ENCODE measurements at regions of chr17 and their contacts with region 1.

Region 1: DNA sequence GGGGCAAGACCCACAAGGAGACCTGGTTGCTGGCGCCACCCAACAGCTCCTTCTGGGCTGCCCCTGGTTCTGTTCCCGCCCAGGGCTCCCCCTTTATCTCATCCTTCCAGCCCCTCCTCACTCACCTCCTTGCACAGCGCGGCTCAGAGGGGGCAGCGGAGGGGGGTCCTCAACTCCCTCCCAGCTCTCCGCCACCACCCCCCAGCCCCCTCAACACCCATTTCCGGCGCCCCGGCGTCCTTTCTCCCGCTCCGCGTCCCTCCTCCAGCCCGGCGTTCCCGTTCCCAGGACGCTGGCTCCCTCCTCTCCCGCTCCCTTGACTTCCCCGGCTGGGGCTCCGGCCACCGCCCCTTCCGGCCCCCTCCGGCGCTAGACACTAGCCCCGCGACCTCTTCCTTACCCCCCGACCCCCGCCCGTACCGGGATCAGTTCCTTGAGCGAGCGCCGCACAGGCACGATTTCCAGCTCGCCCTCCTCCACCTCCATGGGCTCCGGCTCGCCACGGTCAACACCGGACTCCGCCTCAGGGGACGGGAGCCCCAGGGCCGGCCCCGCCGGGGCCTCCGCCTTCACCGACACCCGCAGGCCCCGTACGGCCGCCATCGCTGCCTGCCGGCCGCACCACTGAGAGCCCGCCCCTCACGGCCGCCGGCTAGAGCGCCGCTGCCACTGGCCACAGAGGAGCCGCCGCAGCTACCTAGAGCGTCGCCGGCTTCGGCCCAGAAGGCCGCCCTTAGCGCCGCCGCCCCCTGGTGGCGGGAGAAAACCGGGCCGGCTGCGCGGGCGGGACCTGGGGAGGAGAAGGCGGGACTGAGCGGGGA is at the start of gene NCBP3:
- DNase-seq: peak; percentile 91
- H3K4me3 Mint-ChIP-seq: peak within 1 kb of the TSS; percentile 94
- H3K27ac Mint-ChIP-seq: peak within 1 kb of the TSS; percentile 90
- H3K4me1 Mint-ChIP-seq: peaks cover 22% of the 10 kb centered on the region
- H3K27me3 Mint-ChIP-seq: no peaks in the 10 kb centered on the region
- total RNA-seq, gene NCBP3: 33.9 to 40.4 TPM

Region 2: DNA sequence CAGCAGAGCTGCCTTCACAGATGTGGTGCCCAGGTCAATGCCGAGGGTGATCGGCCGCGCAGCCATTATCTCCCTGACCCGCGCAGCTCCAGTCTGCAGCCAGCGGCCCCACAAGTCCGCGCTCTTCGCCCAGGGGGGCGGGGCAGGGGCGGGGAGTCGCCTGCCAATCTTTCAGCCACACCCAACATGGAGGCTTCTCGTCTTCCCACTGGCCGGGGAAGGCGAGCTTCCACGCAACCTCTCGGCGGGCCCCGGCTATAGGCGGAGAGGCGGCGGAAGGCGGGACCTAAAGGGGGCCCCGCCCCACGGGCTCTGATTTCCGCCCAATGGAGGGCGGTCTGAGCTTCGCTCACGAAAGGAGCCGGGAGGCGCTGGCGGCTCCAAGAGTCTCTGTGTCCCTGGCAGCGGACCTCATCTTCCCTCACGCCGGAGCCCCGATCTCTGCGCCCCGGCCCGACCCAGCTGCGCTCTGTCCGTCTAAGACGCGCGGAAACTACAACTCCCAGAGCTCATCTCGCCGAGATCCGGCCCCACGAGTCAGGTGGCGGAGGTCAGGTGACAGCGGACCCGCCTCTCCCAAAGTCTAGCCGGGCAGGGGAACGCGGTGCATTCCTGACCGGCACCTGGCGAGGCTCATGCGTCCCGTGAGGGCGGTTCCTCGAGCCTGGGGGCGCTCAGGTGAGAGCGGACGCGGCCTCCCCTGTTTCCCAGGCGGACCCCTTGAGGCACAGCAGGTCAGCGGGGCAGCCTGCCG is 209.5 kb before region 1 on chr17 and contains the starts of genes CTNS and SHPK:
- CTCF ChIA-PET with region 1: no interaction called
- intact Hi-C with region 1: loop called (anchors 1 kb)
- DNase-seq: peak; percentile 95
- H3K4me3 Mint-ChIP-seq: peak within 1 kb of the TSS; percentile 95
- H3K27ac Mint-ChIP-seq: peak within 1 kb of the TSS; percentile 99
- H3K4me1 Mint-ChIP-seq: peaks cover 30% of the 10 kb centered on the region
- H3K27me3 Mint-ChIP-seq: no peaks in the 10 kb centered on the region
- total RNA-seq, gene CTNS: 4.5 TPM
- total RNA-seq, gene SHPK: 6.9 to 7.5 TPM

Region 3: GRCh38 chr17:3683054-3683511 is 162.7 kb before region 1 on chr17:
- CTCF ChIA-PET with region 1: interaction called, 3 read pairs
- intact Hi-C with region 1: loop called (anchors 5 kb)
- DNase-seq: peak; percentile 72
- H3K4me3 Mint-ChIP-seq: no peak overlapping the region
- H3K27ac Mint-ChIP-seq: no peak overlapping the region
- H3K4me1 Mint-ChIP-seq: peaks cover 7% of the 10 kb centered on the region
- H3K27me3 Mint-ChIP-seq: no peaks in the 10 kb centered on the region

Region 4: DNA sequence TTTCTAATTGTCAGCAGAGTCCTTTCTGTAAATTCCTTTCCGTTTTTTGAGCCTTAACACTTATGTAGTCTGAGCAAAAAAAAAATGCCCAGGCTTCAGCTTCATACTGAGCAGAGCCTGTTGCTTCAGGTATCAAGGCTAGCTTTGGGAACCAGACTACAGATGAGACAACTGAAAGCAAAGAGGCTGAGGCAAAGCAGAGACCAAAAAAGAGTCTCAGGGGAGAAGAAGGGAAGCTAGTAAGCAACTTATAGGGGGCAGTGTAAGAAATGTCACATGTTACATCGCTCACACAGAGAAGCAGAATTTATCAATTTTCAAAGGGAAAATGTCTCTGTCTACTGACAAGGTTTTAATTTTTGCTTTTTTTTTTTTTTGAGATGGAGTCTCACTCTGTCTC is 118.8 kb before region 1 on chr17:
- CTCF ChIA-PET with region 1: no interaction called
- intact Hi-C with region 1: no loop called
- DNase-seq: no peak
- H3K4me3 Mint-ChIP-seq: no peak overlapping the region
- H3K27ac Mint-ChIP-seq: no peak overlapping the region
- H3K4me1 Mint-ChIP-seq: peaks cover 31% of the 10 kb centered on the region
- H3K27me3 Mint-ChIP-seq: no peaks in the 10 kb centered on the region

Region 5: DNA sequence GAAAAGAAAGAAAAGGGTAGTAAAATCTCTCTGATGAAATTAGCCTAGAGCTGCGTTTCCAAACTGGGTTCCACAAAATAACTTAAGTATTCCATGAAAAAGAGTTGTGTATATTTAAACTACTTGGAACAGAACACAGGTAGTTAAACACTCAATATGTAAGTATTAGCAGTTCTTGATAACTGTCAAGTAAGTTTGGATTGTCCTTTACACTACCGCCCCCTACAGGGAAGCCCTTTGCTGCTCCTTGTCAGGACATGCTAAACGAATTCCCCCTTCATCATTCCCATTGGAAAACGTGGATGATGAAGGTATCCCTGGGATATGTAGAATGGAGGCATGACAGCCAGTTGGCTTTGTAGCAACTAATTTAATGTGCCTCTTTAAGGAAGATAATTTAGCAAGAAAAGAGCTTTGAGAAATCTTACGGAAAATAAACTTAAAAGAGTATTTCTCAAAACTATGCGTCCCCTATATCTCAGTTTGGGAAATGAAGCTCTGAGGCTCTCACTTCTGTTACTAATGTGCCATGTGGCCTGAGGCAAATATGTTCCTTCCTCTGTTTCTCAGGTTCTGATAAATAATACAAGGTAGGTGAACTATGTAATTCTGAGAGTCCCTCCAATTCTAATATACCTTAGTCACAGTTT is 18.6 kb before region 1 on chr17:
- CTCF ChIA-PET with region 1: interaction called, 39 read pairs
- intact Hi-C with region 1: no loop called
- DNase-seq: peak; percentile 89
- H3K4me3 Mint-ChIP-seq: no peak overlapping the region
- H3K27ac Mint-ChIP-seq: no peak overlapping the region
- H3K4me1 Mint-ChIP-seq: peaks cover 2% of the 10 kb centered on the region
- H3K27me3 Mint-ChIP-seq: no peaks in the 10 kb centered on the region

Region 6: DNA sequence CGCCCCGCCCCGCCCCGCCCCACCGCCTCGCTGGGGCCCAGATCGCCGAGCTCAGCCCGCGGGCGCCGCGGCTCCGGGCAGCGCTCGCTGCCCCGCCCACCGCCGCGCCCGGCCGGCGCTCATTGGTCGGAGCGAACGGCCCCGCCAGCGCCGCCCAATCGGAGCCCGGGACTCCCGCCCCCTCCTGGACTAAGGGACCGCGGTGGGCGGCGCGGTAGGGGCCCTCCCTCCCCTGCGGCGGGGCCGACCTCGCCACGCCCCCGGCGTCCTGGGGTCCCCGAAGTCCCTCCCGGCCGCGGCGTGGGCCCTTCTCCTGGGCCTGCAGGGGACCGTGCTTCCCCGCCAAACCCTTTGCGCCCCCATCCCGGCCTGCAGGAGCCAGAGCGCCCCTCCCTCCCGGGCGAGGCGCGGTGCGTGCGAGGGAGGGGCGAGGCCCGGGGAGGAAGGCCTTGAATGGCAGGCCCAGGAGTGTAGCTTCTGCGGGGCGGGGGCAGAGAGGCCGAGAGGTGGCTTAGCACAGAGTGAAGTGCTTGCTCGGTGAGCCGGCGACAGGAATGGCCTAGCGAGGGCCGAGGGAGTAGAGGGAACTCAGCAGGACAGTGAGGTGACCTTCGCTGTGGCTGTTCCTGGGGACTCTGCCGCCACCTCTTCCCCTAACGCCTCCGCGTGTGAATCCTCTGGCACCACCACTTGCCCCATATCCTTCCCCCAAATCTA is 47.3 kb after region 1 on chr17 and contains the start of gene CAMKK1:
- CTCF ChIA-PET with region 1: interaction called, 6 read pairs
- intact Hi-C with region 1: loop called (anchors 1 kb)
- DNase-seq: peak; percentile 88
- H3K4me3 Mint-ChIP-seq: peak within 1 kb of the TSS; percentile 78
- H3K27ac Mint-ChIP-seq: peak within 1 kb of the TSS; percentile 65
- H3K4me1 Mint-ChIP-seq: peaks cover 31% of the 10 kb centered on the region
- H3K27me3 Mint-ChIP-seq: no peaks in the 10 kb centered on the region
- total RNA-seq, gene CAMKK1: 2.4 to 2.7 TPM

Region 7: GRCh38 chr17:3935140-3935542 is 89.3 kb after region 1 on chr17:
- CTCF ChIA-PET with region 1: no interaction called
- intact Hi-C with region 1: no loop called
- DNase-seq: peak; percentile 54
- H3K4me3 Mint-ChIP-seq: no peak overlapping the region
- H3K27ac Mint-ChIP-seq: no peak overlapping the region
- H3K4me1 Mint-ChIP-seq: no peaks in the 10 kb centered on the region
- H3K27me3 Mint-ChIP-seq: no peaks in the 10 kb centered on the region

Region 8: GRCh38 chr17:3965118-3965803 is 119.4 kb after region 1 on chr17:
- CTCF ChIA-PET with region 1: interaction called, 3 read pairs
- intact Hi-C with region 1: loop called (anchors 2 kb)
- DNase-seq: peak; percentile 83
- H3K4me3 Mint-ChIP-seq: peak overlapping the region; percentile 91
- H3K27ac Mint-ChIP-seq: peak overlapping the region; percentile 89
- H3K4me1 Mint-ChIP-seq: peaks cover 38% of the 10 kb centered on the region
- H3K27me3 Mint-ChIP-seq: no peaks in the 10 kb centered on the region